HepG2 (cell line): ENCODE measurements at regions of chr9 and their contacts with region 1.

Region 1: GRCh38 chr9:126809068-126809467 is 4.2 kb downstream of the ZBTB43 start:
- DNase-seq: peak; percentile 75
- ATAC-seq: no peak
- H3K4me3 ChIP-seq: peak overlapping the region in 1 of 3 experiments; percentile 8; a peak in 1 of 6 replicates
- H3K27ac ChIP-seq: peak overlapping the region; percentile 40
- H3K4me1 ChIP-seq: peaks cover 47% of the 10 kb centered on the region
- H3K27me3 ChIP-seq: peaks cover 0 to 4% of the 10 kb centered on the region in 2 experiments; a peak in 1 of 5 replicates
- CTCF ChIP-seq: no peak
- EP300 ChIP-seq: peak in 1 of 2 experiments; percentile 73; a peak in 2 of 4 replicates
- POLR2A ChIP-seq: no peak
- RAD21 ChIP-seq: no peak

Region 2: DNA sequence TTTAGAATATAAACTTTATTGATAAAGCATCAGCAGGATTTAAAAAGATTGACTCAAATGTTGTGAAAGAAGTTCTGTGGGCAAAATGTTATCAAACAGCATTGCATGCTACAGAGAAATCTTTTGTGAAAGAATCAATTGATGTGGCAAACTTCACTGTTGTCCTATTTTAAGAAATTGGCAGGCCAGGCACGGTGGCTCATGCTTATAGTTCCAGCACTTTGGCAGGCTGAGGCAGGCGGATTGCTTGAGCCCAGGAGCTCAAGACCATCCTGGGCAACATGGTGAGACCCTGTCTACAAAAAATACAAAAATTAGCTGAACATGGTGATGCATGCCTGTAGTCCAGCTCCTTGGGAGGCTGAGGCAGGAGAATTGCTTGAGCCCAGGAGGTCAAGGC is 13.2 kb after region 1 on chr9:
- CTCF ChIA-PET with region 1: no interaction called
- POLR2A ChIA-PET with region 1: interaction called, 3 read pairs
- in situ Hi-C with region 1: no loop called
- intact Hi-C with region 1: loop called (anchors 2 kb)
- DNase-seq: no peak
- ATAC-seq: no peak
- H3K4me3 ChIP-seq: no peak overlapping the region
- H3K27ac ChIP-seq: no peak overlapping the region
- H3K4me1 ChIP-seq: peaks cover 22% of the 10 kb centered on the region
- H3K27me3 ChIP-seq: no peaks in the 10 kb centered on the region
- CTCF ChIP-seq: no peak
- EP300 ChIP-seq: no peak
- POLR2A ChIP-seq: no peak
- RAD21 ChIP-seq: no peak

Region 3: GRCh38 chr9:126902210-126902609 is 93.1 kb after region 1 on chr9:
- CTCF ChIA-PET with region 1: no interaction called
- POLR2A ChIA-PET with region 1: no interaction called
- in situ Hi-C with region 1: no loop called
- intact Hi-C with region 1: no loop called
- DNase-seq: no peak
- ATAC-seq: no peak
- H3K4me3 ChIP-seq: no peak overlapping the region
- H3K27ac ChIP-seq: no peak overlapping the region
- H3K4me1 ChIP-seq: no peaks in the 10 kb centered on the region
- H3K27me3 ChIP-seq: peaks cover 0 to 4% of the 10 kb centered on the region in 2 experiments; a peak in 1 of 5 replicates
- CTCF ChIP-seq: no peak
- EP300 ChIP-seq: no peak
- POLR2A ChIP-seq: no peak
- RAD21 ChIP-seq: no peak